Psoas muscle (tissue), 8 donors: ENCODE measurements at regions of chr13 and their contacts with region 1.

Region 1: DNA sequence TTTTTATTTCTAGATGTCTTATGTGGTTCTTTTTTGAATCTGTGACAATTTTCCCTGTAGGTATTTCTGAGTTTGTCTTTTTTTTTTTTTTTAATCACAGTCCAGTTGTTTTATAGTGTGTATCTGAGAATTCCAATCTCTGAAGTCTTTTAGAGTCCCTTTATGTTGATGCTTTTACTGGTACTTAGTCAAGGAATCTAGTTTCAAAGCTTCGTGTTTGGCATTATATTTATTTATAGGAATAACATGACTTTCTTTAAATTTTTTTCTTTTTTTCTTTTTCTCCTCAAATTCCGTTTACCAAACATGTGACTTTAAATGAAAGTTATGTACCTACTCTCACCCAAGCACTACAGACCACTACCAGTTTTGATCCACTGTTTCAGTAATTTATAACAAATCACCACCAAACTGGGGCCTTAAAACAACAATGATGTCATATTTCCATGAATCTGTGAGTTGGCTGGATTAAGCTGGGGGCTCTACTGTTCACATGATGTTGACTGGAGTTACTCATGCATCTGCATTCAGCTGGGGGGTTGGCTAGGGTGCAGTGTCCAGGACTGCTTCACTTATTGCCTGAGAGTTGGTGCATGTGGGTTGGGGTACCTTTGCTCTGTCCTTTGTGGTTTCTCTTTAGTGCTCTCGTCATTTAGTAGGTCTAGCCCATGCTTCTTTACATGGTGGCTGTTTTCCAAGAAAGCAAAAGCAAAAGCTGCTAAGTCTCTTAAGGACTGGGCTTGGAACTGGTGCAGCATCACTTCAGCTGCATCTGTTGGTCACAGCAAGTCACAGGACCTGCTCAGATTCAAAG is 22.3 kb downstream of the KCTD4 start:
- DNase-seq: no peak
- ATAC-seq: no peak
- H3K4me3 ChIP-seq: no peak overlapping the region
- H3K27ac ChIP-seq: no peak overlapping the region
- H3K4me1 ChIP-seq: peaks cover 5% of the 10 kb centered on the region
- H3K27me3 ChIP-seq: no peaks in the 10 kb centered on the region
- CTCF ChIP-seq: no peak

Region 2: GRCh38 chr13:44605275-44605674 is 573.3 kb before region 1 on chr13:
- intact Hi-C with region 1: loop called in 1 of 2 experiments (anchors 5 kb)
- DNase-seq: no peak
- ATAC-seq: no peak
- H3K4me3 ChIP-seq: no peak overlapping the region
- H3K27ac ChIP-seq: no peak overlapping the region
- H3K4me1 ChIP-seq: no peaks in the 10 kb centered on the region
- H3K27me3 ChIP-seq: no peaks in the 10 kb centered on the region
- CTCF ChIP-seq: no peak

Region 3: GRCh38 chr13:45142440-45143345 is 35.9 kb before region 1 on chr13:
- intact Hi-C with region 1: loop called in 1 of 2 experiments (anchors 5 kb)
- DNase-seq: no peak
- ATAC-seq: no peak
- H3K4me3 ChIP-seq: no peak overlapping the region
- H3K27ac ChIP-seq: no peak overlapping the region
- H3K4me1 ChIP-seq: no peaks in the 10 kb centered on the region
- H3K27me3 ChIP-seq: no peaks in the 10 kb centered on the region
- CTCF ChIP-seq: no peak

Region 4: GRCh38 chr13:45434556-45435371 is 256.2 kb after region 1 on chr13:
- intact Hi-C with region 1: no loop called
- DNase-seq: no peak
- ATAC-seq: no peak
- H3K4me3 ChIP-seq: no peak overlapping the region
- H3K27ac ChIP-seq: no peak overlapping the region
- H3K4me1 ChIP-seq: peaks cover 18% of the 10 kb centered on the region
- H3K27me3 ChIP-seq: no peaks in the 10 kb centered on the region
- CTCF ChIP-seq: no peak